PC-9 (cell line): ENCODE measurements at regions of chr11 and their contacts with region 1.

Region 1: GRCh38 chr11:47924184-47924691 is 56.1 kb upstream of the PTPRJ start:
- DNase-seq: peak; percentile 93 to 100
- H3K4me3 ChIP-seq: no peak overlapping the region
- H3K27ac ChIP-seq: peak overlapping the region; percentile 74
- H3K4me1 ChIP-seq: peaks cover 28% of the 10 kb centered on the region
- H3K27me3 ChIP-seq: no peaks in the 10 kb centered on the region
- CTCF ChIP-seq: no peak

Region 2: GRCh38 chr11:47213985-47214564 is 710.2 kb before region 1 on chr11:
- CTCF ChIA-PET with region 1: no interaction called
- POLR2A ChIA-PET with region 1: interaction called, 17 read pairs
- intact Hi-C with region 1: no loop called
- DNase-seq: peak; percentile 85 to 91
- H3K4me3 ChIP-seq: peak overlapping the region; percentile 70
- H3K27ac ChIP-seq: peak overlapping the region; percentile 49
- H3K4me1 ChIP-seq: peaks cover 29% of the 10 kb centered on the region
- H3K27me3 ChIP-seq: no peaks in the 10 kb centered on the region
- CTCF ChIP-seq: no peak

Region 3: GRCh38 chr11:47766305-47767227 is 157.7 kb before region 1 on chr11:
- CTCF ChIA-PET with region 1: interaction called, 6 read pairs
- POLR2A ChIA-PET with region 1: no interaction called
- intact Hi-C with region 1: loop called (anchors 5 kb)
- DNase-seq: peak in 1 of 2 experiments; percentile 56
- H3K4me3 ChIP-seq: peak overlapping the region; percentile 81
- H3K27ac ChIP-seq: peak overlapping the region; percentile 83
- H3K4me1 ChIP-seq: peaks cover 22% of the 10 kb centered on the region
- H3K27me3 ChIP-seq: no peaks in the 10 kb centered on the region
- CTCF ChIP-seq: no peak

Region 4: GRCh38 chr11:47869546-47870393 is 54.5 kb before region 1 on chr11:
- CTCF ChIA-PET with region 1: no interaction called
- POLR2A ChIA-PET with region 1: no interaction called
- intact Hi-C with region 1: loop called (anchors 2 kb)
- DNase-seq: peak; percentile 50 to 57
- H3K4me3 ChIP-seq: no peak overlapping the region
- H3K27ac ChIP-seq: peak overlapping the region; percentile 26
- H3K4me1 ChIP-seq: peaks cover 16% of the 10 kb centered on the region
- H3K27me3 ChIP-seq: no peaks in the 10 kb centered on the region
- CTCF ChIP-seq: no peak

Region 5: GRCh38 chr11:47946682-47947575 is 22.7 kb after region 1 on chr11:
- CTCF ChIA-PET with region 1: no interaction called
- POLR2A ChIA-PET with region 1: no interaction called
- intact Hi-C with region 1: loop called (anchors 1 kb)
- DNase-seq: peak; percentile 93 to 99
- H3K4me3 ChIP-seq: no peak overlapping the region
- H3K27ac ChIP-seq: peak overlapping the region; percentile 79
- H3K4me1 ChIP-seq: peaks cover 55% of the 10 kb centered on the region
- H3K27me3 ChIP-seq: no peaks in the 10 kb centered on the region
- CTCF ChIP-seq: no peak

Region 6: DNA sequence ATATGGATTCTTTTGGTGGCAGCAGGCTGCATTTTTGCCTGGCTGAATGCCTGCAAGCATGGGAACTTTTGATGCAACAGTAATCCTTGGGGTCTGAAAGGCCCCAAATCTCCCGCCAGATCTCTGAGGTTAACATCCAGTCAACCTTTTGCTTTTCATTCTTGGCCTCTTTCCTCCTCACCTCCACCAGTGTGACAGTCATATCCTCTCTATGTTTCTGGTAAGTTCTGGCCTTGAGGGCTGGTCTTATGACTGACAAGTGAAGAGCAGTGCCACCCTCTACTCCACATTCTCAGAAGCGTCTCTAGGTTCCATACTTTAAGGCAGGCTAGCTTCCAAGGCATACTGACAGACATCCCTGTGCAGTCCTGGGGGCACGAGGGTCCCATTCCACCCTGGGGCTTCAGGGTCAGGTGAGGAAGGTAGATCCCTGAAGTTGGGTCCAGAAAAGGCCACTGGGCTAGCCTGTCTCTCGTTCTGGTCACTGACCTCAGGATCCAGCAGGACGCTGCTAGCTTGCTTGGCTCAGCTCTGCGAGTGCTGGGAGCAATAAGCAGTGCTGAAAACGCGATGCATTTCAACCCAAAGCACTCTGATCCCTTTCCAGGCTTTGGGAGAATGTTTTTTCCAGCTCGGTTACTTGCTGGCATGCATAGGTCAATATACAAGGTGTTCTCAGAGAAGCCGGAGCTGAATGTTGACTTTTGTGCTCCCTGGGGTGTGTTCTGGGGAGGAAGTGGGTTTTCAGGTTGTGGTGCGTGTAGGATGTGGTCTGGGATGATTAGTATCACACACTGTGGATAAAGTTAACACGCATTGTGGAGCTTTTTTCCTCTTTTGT is 131.3 kb after region 1 on chr11:
- CTCF ChIA-PET with region 1: no interaction called
- POLR2A ChIA-PET with region 1: no interaction called
- intact Hi-C with region 1: loop called (anchors 5 kb)
- DNase-seq: peak; percentile 81 to 100
- H3K4me3 ChIP-seq: peak overlapping the region; percentile 46; the same call in 1 of the 2 replicates
- H3K27ac ChIP-seq: peak overlapping the region; percentile 96
- H3K4me1 ChIP-seq: peaks cover 91% of the 10 kb centered on the region
- H3K27me3 ChIP-seq: no peaks in the 10 kb centered on the region
- CTCF ChIP-seq: no peak